Activated T-helper 2 cell treated with anti-CD3 and anti-CD28 coated beads, Interferon-gamma antibody, Interleukin-2, Interleukin-4, amounts not matched to agents 10 μg/mL and 5 μg/mL and 100 μg/mL, durations not matched to agents 14 hours and 24 hours and 36 hours (primary cell): ENCODE measurements at regions of chr14 and their contacts with region 1.

Region 1: GRCh38 chr14:54730156-54730961 is 163.4 kb downstream of the SAMD4A start:
- DNase-seq: peak; percentile 37
- H3K4me3 Mint-ChIP-seq: peak overlapping the region; percentile 24
- H3K27ac Mint-ChIP-seq: peak overlapping the region; percentile 93
- H3K4me1 Mint-ChIP-seq: peaks cover 44% of the 10 kb centered on the region
- H3K27me3 Mint-ChIP-seq: peaks cover 20% of the 10 kb centered on the region

Region 2: DNA sequence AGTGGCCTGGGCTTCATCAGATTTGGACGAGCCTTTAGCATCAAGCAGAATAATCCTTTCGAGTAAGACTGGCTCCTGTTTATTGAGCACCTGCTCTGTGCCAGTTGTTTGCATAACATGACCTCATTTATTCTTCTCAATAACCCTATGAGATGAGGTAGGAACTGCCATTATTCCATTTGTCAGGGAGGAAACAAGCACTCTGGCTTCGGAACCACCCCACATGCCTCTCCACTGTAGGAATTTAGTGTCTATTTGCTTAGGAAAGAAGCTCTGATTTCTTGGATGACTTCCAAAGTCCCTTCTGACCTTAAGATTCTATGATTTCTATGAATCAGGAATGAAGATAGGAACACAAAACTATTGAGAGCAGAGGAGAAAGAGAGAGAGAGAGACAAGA is 152.4 kb before region 1 on chr14:
- intact Hi-C with region 1: no loop called
- DNase-seq: no peak
- H3K4me3 Mint-ChIP-seq: no peak overlapping the region
- H3K27ac Mint-ChIP-seq: no peak overlapping the region
- H3K4me1 Mint-ChIP-seq: no peaks in the 10 kb centered on the region
- H3K27me3 Mint-ChIP-seq: peaks cover 9% of the 10 kb centered on the region

Region 3: GRCh38 chr14:54627540-54628363 is 102.6 kb before region 1 on chr14:
- intact Hi-C with region 1: loop called (anchors 1 kb)
- DNase-seq: peak; percentile 27
- H3K4me3 Mint-ChIP-seq: peak overlapping the region; percentile 52
- H3K27ac Mint-ChIP-seq: peak overlapping the region; percentile 76
- H3K4me1 Mint-ChIP-seq: peaks cover 44% of the 10 kb centered on the region
- H3K27me3 Mint-ChIP-seq: no peaks in the 10 kb centered on the region

Region 4: GRCh38 chr14:54669721-54670561 is 60.4 kb before region 1 on chr14:
- intact Hi-C with region 1: loop called (anchors 2 kb)
- DNase-seq: no peak
- H3K4me3 Mint-ChIP-seq: no peak overlapping the region
- H3K27ac Mint-ChIP-seq: no peak overlapping the region
- H3K4me1 Mint-ChIP-seq: peaks cover 51% of the 10 kb centered on the region
- H3K27me3 Mint-ChIP-seq: peaks cover 21% of the 10 kb centered on the region

Region 5: GRCh38 chr14:54686219-54686870 is 44.0 kb before region 1 on chr14:
- intact Hi-C with region 1: loop called (anchors 5 kb)
- DNase-seq: no peak
- H3K4me3 Mint-ChIP-seq: no peak overlapping the region
- H3K27ac Mint-ChIP-seq: no peak overlapping the region
- H3K4me1 Mint-ChIP-seq: peaks cover 27% of the 10 kb centered on the region
- H3K27me3 Mint-ChIP-seq: peaks cover 27% of the 10 kb centered on the region

Region 6: GRCh38 chr14:54709444-54709843 is 20.9 kb before region 1 on chr14:
- intact Hi-C with region 1: loop called (anchors 2 kb)
- DNase-seq: no peak
- H3K4me3 Mint-ChIP-seq: no peak overlapping the region
- H3K27ac Mint-ChIP-seq: no peak overlapping the region
- H3K4me1 Mint-ChIP-seq: peaks cover 17% of the 10 kb centered on the region
- H3K27me3 Mint-ChIP-seq: peaks cover 13% of the 10 kb centered on the region

Region 7: GRCh38 chr14:55333711-55334485 is 603.5 kb after region 1 on chr14:
- intact Hi-C with region 1: loop called (anchors 10 kb)
- DNase-seq: no peak
- H3K4me3 Mint-ChIP-seq: peak overlapping the region; percentile 60
- H3K27ac Mint-ChIP-seq: peak overlapping the region; percentile 87
- H3K4me1 Mint-ChIP-seq: peaks cover 71% of the 10 kb centered on the region
- H3K27me3 Mint-ChIP-seq: no peaks in the 10 kb centered on the region